AG04449 (cell line): ENCODE measurements at regions of chr21 and their contacts with region 1.

Region 1: GRCh38 chr21:28745131-28746016 is 247.3 kb downstream of the LTN1 start:
- DNase-seq: peak; percentile 69
- H3K4me3 ChIP-seq: peak overlapping the region; percentile 51
- CTCF ChIP-seq: peak; percentile 69

Region 2: GRCh38 chr21:26842976-26843932 is 1902.1 kb before region 1 on chr21:
- CTCF ChIA-PET with region 1: interaction called, 106 read pairs
- POLR2A ChIA-PET with region 1: interaction called, 12 read pairs
- DNase-seq: peak; percentile 84
- H3K4me3 ChIP-seq: peak overlapping the region; percentile 98
- CTCF ChIP-seq: peak; percentile 59

Region 3: DNA sequence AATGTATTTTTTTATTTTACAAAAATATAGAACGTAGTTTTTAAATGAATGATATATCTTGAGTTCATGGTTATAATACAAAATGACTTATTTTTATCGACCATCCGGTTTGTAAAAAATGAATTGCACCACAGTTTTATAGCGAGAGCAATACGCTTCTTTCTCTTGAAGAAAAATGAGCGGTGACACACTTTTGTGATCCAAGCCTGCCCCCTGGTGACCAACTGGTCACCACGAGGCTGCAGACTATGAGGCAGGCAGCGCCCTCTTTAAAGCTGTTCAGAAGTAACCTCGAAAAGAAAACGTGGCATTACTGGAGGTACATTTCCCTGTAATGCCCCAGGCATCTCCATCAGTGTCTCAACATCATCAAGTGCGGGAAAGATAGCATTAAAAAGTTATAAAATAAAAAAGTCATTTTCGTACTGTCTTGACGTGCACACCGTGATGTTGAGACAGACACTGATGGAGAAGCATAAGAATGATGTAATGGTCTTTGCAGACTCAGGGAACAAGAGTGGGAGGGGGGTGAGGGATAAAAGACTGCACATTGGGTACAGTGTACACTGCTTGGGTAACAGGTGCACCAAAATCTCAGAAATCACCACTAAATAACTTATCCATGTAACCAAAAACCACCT is 1044.3 kb before region 1 on chr21:
- CTCF ChIA-PET with region 1: interaction called, 36 read pairs
- POLR2A ChIA-PET with region 1: no interaction called
- DNase-seq: peak; percentile 47
- H3K4me3 ChIP-seq: no peak overlapping the region
- CTCF ChIP-seq: peak; percentile 68

Region 4: GRCh38 chr21:28336314-28336713 is 409.1 kb before region 1 on chr21:
- CTCF ChIA-PET with region 1: interaction called, 95 read pairs
- POLR2A ChIA-PET with region 1: interaction called, 3 read pairs
- DNase-seq: peak; percentile 76
- H3K4me3 ChIP-seq: no peak overlapping the region
- CTCF ChIP-seq: no peak

Region 5: GRCh38 chr21:28761674-28762356 is 16.4 kb after region 1 on chr21:
- CTCF ChIA-PET with region 1: interaction called, 38 read pairs
- POLR2A ChIA-PET with region 1: no interaction called
- DNase-seq: no peak
- H3K4me3 ChIP-seq: no peak overlapping the region
- CTCF ChIP-seq: no peak

Region 6: DNA sequence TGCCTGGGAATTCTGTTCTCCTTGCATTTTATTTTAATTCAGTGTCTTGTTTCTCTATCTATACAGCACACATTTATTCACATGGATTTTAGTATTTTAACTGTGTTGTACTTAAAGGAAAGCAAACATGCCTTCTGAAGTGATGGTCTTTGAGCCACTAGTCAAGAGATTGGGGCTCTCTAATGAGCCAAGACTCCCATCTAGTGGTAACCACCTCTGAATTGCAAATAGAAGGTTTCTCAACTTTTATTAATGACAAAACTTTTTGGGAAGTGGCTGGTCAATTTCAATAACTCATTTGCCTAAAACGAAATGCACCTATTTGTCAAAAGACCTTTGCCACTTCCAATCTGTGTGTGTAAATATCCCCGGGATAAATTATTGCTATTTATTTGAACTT is 47.7 kb after region 1 on chr21:
- CTCF ChIA-PET with region 1: interaction called, 29 read pairs
- POLR2A ChIA-PET with region 1: no interaction called
- DNase-seq: no peak
- H3K4me3 ChIP-seq: no peak overlapping the region
- CTCF ChIP-seq: peak; percentile 37